ENCODE measurements at regions of chr6 and their contacts with region 1.

Region 1: GRCh38 chr6:166381733-166382499 is 824 bp downstream of the MPC1 start:
- DNase-seq: peak in 1 of 2 experiments; percentile 93
- H3K4me3 ChIP-seq: peak overlapping the region; percentile 59 to 83 (median 62)
- H3K27ac ChIP-seq: no peak overlapping the region
- H3K4me1 ChIP-seq: peaks cover 0 to 4% (median 1%) of the 10 kb centered on the region in 4 experiments; a peak in 3 of 7 replicates
- H3K27me3 ChIP-seq: no peaks in the 10 kb centered on the region
- CTCF ChIP-seq: peak; percentile 69 to 90 (median 88)
- EP300 ChIP-seq: no peak
- POLR2A ChIP-seq: no peak
- RAD21 ChIP-seq: peak; percentile 64 to 74

Region 2: GRCh38 chr6:166258854-166259276 is 123.1 kb before region 1 on chr6:
- CTCF ChIA-PET with region 1: no interaction called
- POLR2A ChIA-PET with region 1: no interaction called
- DNase-seq: no peak
- H3K4me3 ChIP-seq: no peak overlapping the region
- H3K27ac ChIP-seq: no peak overlapping the region
- H3K4me1 ChIP-seq: peaks cover 0 to 2% (median 0%) of the 10 kb centered on the region in 4 experiments; a peak in 2 of 7 replicates
- H3K27me3 ChIP-seq: peaks cover 7 to 34% (median 24%) of the 10 kb centered on the region in 4 experiments
- CTCF ChIP-seq: no peak
- EP300 ChIP-seq: no peak
- POLR2A ChIP-seq: no peak
- RAD21 ChIP-seq: no peak

Region 3: DNA sequence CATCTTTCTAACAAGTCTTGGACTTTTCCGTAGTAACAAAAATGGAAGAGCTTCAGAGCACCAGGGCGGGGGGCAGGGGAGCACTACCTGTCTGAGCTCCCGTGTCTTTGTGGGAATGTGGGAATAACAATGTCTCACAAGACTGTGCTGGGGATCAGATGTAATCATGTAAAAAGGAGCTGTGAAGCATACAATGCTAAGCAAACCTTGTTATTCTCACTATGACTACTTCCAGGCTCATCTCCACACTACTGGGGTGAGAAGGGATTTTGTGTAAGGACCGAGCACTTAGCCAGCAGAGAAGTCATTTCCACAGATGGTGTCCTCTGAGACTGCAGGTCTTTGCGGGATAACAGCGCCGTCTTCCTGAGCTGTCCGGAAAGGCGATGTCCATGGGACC is 100.8 kb before region 1 on chr6:
- CTCF ChIA-PET with region 1: interaction called, 21 read pairs
- POLR2A ChIA-PET with region 1: interaction called, 4 read pairs
- DNase-seq: no peak
- H3K4me3 ChIP-seq: no peak overlapping the region
- H3K27ac ChIP-seq: no peak overlapping the region
- H3K4me1 ChIP-seq: no peaks in the 10 kb centered on the region
- H3K27me3 ChIP-seq: peaks cover 0 to 7% (median 0%) of the 10 kb centered on the region in 4 experiments; a peak in 3 of 7 replicates
- CTCF ChIP-seq: no peak
- EP300 ChIP-seq: no peak
- POLR2A ChIP-seq: no peak
- RAD21 ChIP-seq: no peak

Region 4: DNA sequence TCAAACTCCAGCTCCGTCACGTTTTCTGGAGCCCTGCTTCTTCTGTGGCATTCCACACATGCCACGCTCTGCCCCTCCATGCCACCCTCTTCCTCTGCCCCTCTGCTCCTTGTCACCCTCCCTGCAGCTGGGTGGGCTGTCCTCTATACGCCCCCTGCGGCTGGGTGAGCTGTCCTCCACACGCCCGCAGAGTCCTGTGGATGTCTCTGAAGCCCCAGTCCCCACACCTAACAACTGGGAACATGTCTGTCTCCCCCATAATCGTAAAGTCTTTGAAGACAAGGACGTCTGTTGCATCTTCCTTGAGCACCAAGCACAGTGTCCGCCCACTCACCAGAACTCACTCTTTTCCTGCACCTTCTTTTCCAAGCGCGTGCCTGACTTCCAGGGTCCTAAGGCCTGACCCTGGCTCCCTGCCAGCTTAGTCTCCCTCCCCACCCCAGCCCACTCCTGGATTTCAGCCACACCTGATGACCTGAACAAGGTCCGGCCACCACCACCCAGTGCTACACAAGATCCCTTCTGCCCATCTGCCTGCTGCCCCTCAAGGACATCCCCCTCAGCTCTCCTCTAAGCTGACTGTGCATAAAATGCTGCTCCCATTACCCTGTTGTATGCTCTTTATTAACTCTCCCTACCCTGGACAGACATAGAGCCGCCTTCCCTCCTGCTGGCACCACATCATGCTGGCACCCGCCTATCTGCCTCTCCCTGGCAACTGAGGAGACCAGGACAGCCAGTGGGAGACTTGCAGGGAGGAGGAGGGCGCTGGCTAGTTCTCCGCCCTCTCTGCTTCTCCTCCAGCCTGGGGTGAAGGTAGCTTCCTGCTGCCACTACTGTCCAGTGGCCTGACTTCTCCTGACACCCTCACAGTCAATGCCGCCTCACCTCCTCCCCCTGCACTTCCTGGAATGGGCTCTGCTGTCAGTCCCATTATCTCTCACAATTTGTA is 63.0 kb before region 1 on chr6:
- CTCF ChIA-PET with region 1: interaction called, 88 read pairs
- POLR2A ChIA-PET with region 1: interaction called, 4 read pairs
- DNase-seq: no peak
- H3K4me3 ChIP-seq: no peak overlapping the region
- H3K27ac ChIP-seq: no peak overlapping the region
- H3K4me1 ChIP-seq: 0 out of 7 replicates have a peak, but pooled peaks cover 0 to 2% (median 0%) of the 10 kb centered on the region in 4 experiments
- H3K27me3 ChIP-seq: no peaks in the 10 kb centered on the region
- CTCF ChIP-seq: no peak
- EP300 ChIP-seq: no peak
- POLR2A ChIP-seq: no peak
- RAD21 ChIP-seq: no peak

Region 5: DNA sequence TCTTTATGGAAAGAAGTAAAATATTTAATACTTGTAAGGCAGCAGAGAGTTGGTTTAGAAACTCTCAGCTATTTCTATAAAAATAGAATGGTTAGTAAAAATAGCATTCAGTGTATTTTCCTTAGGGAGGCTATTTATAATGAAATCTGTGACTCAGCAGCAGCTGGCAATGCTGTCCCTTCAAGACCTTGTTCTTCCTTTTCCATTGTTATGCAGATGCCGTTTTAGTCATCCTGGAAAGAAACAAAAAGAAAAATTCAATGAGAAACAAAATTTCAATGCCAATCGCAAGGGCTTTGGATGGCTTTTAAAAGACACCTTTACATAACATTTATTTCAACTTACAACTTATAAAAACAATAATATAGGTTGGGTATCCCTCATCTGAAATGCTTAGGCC is 16.7 kb before region 1 on chr6:
- CTCF ChIA-PET with region 1: interaction called, 19 read pairs
- POLR2A ChIA-PET with region 1: interaction called, 6 read pairs
- DNase-seq: no peak
- H3K4me3 ChIP-seq: peak overlapping the region in 1 of 4 experiments; percentile 45; a peak in 2 of 8 replicates
- H3K27ac ChIP-seq: peak overlapping the region; percentile 60; the same call in 1 of the 2 replicates
- H3K4me1 ChIP-seq: peaks cover 2 to 18% (median 13%) of the 10 kb centered on the region in 4 experiments; a peak in 6 of 7 replicates
- H3K27me3 ChIP-seq: no peaks in the 10 kb centered on the region
- CTCF ChIP-seq: no peak
- EP300 ChIP-seq: peak in 1 of 2 experiments; percentile 58; a peak in 1 of 3 replicates
- POLR2A ChIP-seq: no peak
- RAD21 ChIP-seq: no peak

Region 6: GRCh38 chr6:166430269-166430668 is 48.4 kb after region 1 on chr6:
- CTCF ChIA-PET with region 1: no interaction called
- POLR2A ChIA-PET with region 1: no interaction called
- DNase-seq: no peak
- H3K4me3 ChIP-seq: no peak overlapping the region
- H3K27ac ChIP-seq: no peak overlapping the region
- H3K4me1 ChIP-seq: no peaks in the 10 kb centered on the region
- H3K27me3 ChIP-seq: no peaks in the 10 kb centered on the region
- CTCF ChIP-seq: no peak
- EP300 ChIP-seq: no peak
- POLR2A ChIP-seq: no peak
- RAD21 ChIP-seq: no peak

Measured in H1 (cell line).